ENCODE measurements at regions of chr4 and their contacts with region 1.

Region 1: DNA sequence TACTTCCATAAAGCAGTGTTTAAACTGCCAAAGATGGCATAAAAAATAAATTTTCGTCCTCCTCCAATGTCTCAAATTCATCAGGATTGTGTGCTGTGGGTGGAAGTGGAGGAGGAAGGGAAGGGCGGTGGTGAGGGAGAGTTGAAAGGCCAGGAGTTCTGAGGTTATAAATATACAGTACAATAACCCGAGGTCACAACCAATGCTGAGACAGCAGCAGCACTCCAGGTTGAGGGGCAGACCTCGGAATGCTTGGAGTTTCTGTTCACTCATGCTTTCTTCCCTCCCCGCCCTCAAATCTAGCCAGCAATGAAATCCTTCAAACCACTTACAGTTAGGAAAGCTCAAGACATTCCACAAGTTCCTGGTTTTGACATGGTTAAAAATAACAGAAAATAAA is 134.0 kb upstream of the SMAD1 start:
- DNase-seq: no peak
- H3K4me3 ChIP-seq: no peak overlapping the region
- H3K27ac ChIP-seq: no peak overlapping the region
- H3K4me1 ChIP-seq: no peaks in the 10 kb centered on the region
- H3K27me3 ChIP-seq: no peaks in the 10 kb centered on the region
- CTCF ChIP-seq: no peak
- EP300 ChIP-seq: no peak
- POLR2A ChIP-seq: no peak

Region 2: DNA sequence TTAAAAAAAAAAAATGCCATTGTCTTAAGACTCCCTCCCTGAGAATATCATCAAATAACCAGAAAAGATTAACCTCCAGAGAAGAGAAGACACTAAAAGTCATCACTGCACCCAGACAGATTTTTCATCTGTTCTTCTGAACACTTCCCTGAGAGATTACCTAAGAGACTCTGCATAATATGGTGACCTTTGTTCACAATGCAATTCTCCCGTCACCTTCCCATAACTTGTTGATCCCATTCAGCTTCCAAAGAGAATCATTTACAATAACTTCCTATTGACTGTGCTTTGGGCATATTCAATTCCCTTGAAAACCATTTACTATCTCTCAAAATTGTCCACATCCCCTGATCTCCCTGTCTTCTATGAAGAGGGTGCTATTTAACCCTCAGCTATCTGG is 48.9 kb after region 1 on chr4:
- intact Hi-C with region 1: loop called in 1 of 4 experiments (anchors 5 kb)
- DNase-seq: no peak
- H3K4me3 ChIP-seq: no peak overlapping the region
- H3K27ac ChIP-seq: no peak overlapping the region
- H3K4me1 ChIP-seq: no peaks in the 10 kb centered on the region
- H3K27me3 ChIP-seq: no peaks in the 10 kb centered on the region
- CTCF ChIP-seq: no peak
- EP300 ChIP-seq: no peak
- POLR2A ChIP-seq: no peak

Region 3: DNA sequence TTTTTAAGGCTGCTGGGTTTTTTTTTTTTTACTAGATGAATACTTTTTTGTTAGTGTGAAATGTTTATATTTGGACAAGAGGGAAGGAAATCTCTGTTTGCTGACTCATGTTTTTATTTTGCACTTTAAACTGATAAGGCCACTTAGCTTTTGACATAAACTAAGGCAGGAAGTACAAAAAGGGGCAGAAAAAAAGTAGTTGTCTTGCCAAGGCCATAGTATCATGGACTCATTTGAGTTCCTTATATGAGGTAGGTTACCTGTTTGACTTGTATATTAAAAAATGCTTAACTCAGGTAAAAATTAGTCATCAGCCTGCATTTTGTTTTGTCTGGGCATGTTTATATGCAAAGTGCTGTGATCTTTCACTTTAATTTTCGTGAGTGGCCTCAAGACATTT is 160.0 kb after region 1 on chr4:
- intact Hi-C with region 1: no loop called
- DNase-seq: no peak
- H3K4me3 ChIP-seq: no peak overlapping the region
- H3K27ac ChIP-seq: no peak overlapping the region
- H3K4me1 ChIP-seq: no peaks in the 10 kb centered on the region
- H3K27me3 ChIP-seq: no peaks in the 10 kb centered on the region
- CTCF ChIP-seq: no peak
- EP300 ChIP-seq: no peak
- POLR2A ChIP-seq: no peak

Measured in ovary (tissue), 10 donors.